CD8-positive, alpha-beta T cell (primary cell): ENCODE measurements at regions of chr1 and their contacts with region 1.

Region 1: DNA sequence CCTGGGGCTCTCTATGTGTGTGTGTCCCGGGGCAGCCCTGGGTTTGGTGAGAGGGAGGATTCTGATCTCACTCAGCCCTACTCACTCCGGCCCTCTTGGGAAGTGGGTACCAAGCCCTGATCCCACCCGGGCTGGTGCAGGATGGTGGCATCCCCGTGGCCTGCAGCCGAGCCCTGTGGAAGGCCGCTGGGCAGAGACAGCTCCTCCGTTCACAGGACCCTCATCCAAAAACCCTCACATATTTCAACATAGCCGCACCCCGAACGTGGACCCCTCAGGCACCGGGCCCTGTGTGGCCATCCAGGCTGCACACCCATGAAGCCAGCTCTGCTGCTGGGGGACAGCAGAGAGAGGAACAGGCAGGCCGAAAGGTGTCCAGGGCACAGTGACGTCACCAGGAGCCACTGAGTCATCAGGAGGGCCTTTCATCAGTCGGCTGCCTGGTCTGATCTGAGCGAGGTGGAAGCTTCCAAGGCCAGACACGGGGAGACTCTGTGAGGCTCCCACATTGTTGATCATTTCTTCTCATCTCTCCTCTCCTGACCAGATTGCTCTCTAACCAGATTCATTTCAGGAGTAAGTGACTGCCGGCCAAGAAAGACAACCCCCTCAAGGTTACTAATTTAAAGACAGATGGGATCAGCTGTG is 16.2 kb upstream of the GPR157 start:
- DNase-seq: no peak
- ATAC-seq: no peak
- H3K4me3 ChIP-seq: no peak overlapping the region
- H3K4me3 Mint-ChIP-seq: no peak overlapping the region
- H3K27ac ChIP-seq: no peak overlapping the region
- H3K27ac Mint-ChIP-seq: no peak overlapping the region
- H3K4me1 ChIP-seq: no peaks in the 10 kb centered on the region
- H3K4me1 Mint-ChIP-seq: peaks cover 3% of the 10 kb centered on the region
- H3K27me3 ChIP-seq: no peaks in the 10 kb centered on the region
- H3K27me3 Mint-ChIP-seq: no peaks in the 10 kb centered on the region
- CTCF ChIP-seq: no peak

Region 2: DNA sequence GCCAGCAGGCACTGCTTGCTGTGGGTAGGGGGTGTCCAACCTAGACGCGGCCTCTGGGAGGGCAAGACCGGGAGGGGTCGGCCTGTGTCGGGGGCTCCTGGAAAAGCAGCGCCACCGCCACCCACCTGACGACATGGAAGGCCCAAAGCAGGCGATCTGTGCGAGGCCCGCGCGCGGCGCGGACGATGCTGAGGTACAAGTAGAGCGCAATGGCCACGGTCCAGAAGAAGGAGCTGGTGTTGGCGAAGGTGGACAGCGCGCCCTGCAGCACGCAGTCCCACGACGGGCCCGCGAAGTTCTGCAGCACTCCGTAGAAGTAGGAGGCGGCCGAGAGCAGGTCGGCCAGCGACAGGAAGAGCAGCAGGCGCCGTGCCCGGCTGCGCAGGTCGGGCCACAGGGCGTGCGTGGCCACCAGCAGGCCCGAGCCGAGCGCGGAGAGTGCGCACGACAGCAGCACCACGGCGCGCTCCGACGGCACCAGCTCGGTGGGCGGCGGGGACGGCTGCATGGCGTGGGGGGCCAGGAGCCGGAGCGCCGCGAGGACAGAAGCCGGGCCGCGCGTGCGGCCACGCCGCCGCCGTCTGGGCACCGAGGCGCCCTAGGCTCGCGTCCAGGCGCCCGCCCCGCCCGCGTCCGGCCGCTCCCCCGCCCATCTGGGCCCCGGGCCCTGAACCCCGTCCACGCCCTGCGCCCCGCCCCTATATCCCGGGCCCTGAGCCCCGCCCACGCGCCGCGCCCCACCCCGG is 16.5 kb before region 1 on chr1 and contains the start of gene GPR157:
- CTCF ChIA-PET with region 1: interaction called, 21 read pairs
- POLR2A ChIA-PET with region 1: no interaction called
- intact Hi-C with region 1: no loop called
- DNase-seq: peak; percentile 56 to 88 (median 81)
- ATAC-seq: peak; percentile 84
- H3K4me3 ChIP-seq: peak within 1 kb of the TSS; percentile 61 to 68
- H3K4me3 Mint-ChIP-seq: peak within 1 kb of the TSS; percentile 90
- H3K27ac ChIP-seq: peak within 1 kb of the TSS; percentile 37 to 50
- H3K27ac Mint-ChIP-seq: peak within 1 kb of the TSS; percentile 75
- H3K4me1 ChIP-seq: peaks cover 33% of the 10 kb centered on the region
- H3K4me1 Mint-ChIP-seq: peaks cover 35% of the 10 kb centered on the region
- H3K27me3 ChIP-seq: no peaks in the 10 kb centered on the region
- H3K27me3 Mint-ChIP-seq: no peaks in the 10 kb centered on the region
- CTCF ChIP-seq: no peak
- total RNA-seq, gene GPR157: 1.9 to 2.9 TPM

Region 3: DNA sequence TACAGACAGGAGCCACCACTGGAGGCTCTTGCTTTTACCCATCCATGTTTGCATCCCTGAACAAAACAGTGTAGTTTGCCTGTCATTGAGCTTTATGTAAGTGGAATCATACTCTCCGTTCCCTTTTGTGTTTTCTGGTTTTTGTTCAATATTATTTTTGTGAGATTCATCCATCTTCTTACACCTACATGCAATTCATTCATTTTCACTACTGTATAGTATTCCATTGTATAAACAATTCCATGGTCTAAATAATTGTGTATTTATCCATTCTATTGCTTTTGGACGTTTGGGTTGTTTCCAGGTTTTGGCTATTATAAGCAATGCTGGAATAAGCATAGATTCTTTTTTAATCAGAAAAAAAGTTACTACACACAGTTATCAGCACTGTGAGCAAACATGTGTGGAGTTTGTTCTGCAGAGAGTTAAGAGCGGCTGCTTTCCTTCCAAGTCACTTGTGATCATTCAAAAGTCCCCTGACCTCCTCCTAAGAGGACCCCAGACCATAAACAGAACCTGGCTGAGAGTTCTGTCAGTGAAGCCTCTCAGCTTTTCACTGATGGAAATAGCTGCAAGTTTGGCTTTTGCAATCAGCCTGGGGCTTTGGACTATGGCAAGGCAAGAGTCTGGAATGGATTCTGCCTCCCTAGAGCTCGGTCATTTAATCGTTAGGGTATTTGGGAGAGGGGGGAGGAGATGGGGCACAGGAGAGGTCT is 11.1 kb before region 1 on chr1:
- CTCF ChIA-PET with region 1: interaction called, 21 read pairs
- POLR2A ChIA-PET with region 1: no interaction called
- intact Hi-C with region 1: no loop called
- DNase-seq: no peak
- ATAC-seq: no peak
- H3K4me3 ChIP-seq: no peak overlapping the region
- H3K4me3 Mint-ChIP-seq: no peak overlapping the region
- H3K27ac ChIP-seq: no peak overlapping the region
- H3K27ac Mint-ChIP-seq: no peak overlapping the region
- H3K4me1 ChIP-seq: no peaks in the 10 kb centered on the region
- H3K4me1 Mint-ChIP-seq: peaks cover 8% of the 10 kb centered on the region
- H3K27me3 ChIP-seq: no peaks in the 10 kb centered on the region
- H3K27me3 Mint-ChIP-seq: peaks cover 3% of the 10 kb centered on the region
- CTCF ChIP-seq: no peak

Region 4: GRCh38 chr1:9211291-9211811 is 66.2 kb after region 1 on chr1:
- CTCF ChIA-PET with region 1: no interaction called
- POLR2A ChIA-PET with region 1: no interaction called
- intact Hi-C with region 1: no loop called
- DNase-seq: no peak
- ATAC-seq: no peak
- H3K4me3 ChIP-seq: no peak overlapping the region
- H3K4me3 Mint-ChIP-seq: no peak overlapping the region
- H3K27ac ChIP-seq: no peak overlapping the region
- H3K27ac Mint-ChIP-seq: no peak overlapping the region
- H3K4me1 ChIP-seq: no peaks in the 10 kb centered on the region
- H3K4me1 Mint-ChIP-seq: no peaks in the 10 kb centered on the region
- H3K27me3 ChIP-seq: no peaks in the 10 kb centered on the region
- H3K27me3 Mint-ChIP-seq: peaks cover 23% of the 10 kb centered on the region
- CTCF ChIP-seq: no peak